ENCODE measurements at regions of chr3 and their contacts with region 1.

Region 1: GRCh38 chr3:72847751-72848702 is at the start of gene SHQ1:
- DNase-seq: peak; percentile 95 to 97 (median 97)
- H3K4me3 ChIP-seq: peak within 1 kb of the TSS; percentile 54 to 96 (median 87)
- H3K27ac ChIP-seq: peak within 1 kb of the TSS in 1 of 2 experiments; percentile 69
- H3K4me1 ChIP-seq: peaks cover 19 to 49% (median 32%) of the 10 kb centered on the region in 4 experiments
- H3K27me3 ChIP-seq: no peaks in the 10 kb centered on the region

Region 2: DNA sequence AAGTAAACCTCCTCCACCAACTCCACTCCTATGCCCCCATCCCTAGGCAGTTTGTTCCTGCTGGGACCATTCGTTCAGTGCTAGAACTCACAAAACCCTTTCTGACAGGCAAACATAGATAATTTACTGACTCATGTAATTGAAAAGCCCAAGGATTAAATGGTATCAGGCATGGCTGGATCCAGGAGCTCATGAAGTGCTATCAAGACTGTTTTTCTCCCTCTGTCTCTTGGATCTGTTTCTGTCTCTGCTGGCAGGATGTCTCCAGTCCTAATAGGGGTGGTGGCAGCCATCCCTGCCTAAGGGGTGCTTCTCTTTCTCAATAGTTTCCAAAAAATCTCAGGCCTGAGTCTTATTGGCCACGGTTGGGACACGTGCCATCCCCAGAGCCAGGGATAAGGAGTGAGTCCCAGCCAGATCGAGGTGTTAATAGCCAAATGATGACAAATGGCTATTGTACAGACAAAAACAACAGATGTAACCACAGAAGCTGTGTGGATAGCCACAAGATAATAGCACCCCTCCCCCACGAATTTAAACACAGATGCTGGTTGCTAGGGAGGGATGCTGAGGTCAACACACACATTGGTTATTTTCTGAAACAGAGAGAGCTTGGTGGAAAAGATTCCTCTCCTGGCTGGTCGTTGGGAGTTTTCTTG is 168.4 kb before region 1 on chr3:
- CTCF ChIA-PET with region 1: no interaction called
- POLR2A ChIA-PET with region 1: no interaction called
- DNase-seq: peak; percentile 23 to 87 (median 84)
- H3K4me3 ChIP-seq: no peak overlapping the region
- H3K27ac ChIP-seq: no peak overlapping the region
- H3K4me1 ChIP-seq: peaks cover 0 to 6% (median 3%) of the 10 kb centered on the region in 4 experiments
- H3K27me3 ChIP-seq: no peaks in the 10 kb centered on the region

Region 3: DNA sequence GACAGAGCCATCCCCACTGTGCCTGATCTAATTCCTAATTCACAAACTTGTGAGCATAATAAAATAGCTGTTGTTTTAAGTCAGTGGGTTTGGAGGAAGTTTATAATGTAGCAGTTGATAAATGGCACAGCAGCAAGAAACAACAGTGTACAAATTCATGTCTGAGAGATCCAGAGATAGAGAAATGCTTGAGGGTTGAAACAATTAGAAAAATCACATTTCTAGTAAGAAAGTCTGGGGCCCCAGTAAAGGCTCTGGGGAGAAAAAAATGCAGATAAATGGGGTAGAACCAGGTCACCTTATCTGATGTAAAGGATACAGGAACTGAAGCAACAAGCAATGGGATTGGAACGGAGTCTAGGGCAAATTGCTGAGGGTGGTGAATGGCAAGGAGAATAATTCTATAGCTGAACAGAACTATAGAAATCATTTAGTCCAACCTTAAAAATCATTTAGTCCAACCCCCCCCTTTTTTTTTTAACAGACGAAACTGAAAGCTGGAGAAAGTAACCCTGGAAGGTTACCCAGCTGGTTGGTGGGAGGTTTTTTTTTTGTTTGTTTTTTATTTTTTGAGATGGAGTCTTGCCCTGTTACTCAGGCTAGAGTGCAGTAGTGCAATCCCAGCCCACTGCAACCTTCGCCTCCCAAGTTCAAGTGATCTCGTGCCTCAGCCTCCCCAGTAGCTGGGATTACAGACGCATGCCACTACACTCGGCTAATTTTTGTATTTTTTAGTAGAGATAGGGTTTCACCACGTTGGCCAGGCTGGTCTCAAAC is 14.5 kb after region 1 on chr3:
- CTCF ChIA-PET with region 1: interaction called, 12 read pairs
- POLR2A ChIA-PET with region 1: no interaction called
- DNase-seq: no peak
- H3K4me3 ChIP-seq: no peak overlapping the region
- H3K27ac ChIP-seq: no peak overlapping the region
- H3K4me1 ChIP-seq: no peaks in the 10 kb centered on the region
- H3K27me3 ChIP-seq: no peaks in the 10 kb centered on the region

Region 4: DNA sequence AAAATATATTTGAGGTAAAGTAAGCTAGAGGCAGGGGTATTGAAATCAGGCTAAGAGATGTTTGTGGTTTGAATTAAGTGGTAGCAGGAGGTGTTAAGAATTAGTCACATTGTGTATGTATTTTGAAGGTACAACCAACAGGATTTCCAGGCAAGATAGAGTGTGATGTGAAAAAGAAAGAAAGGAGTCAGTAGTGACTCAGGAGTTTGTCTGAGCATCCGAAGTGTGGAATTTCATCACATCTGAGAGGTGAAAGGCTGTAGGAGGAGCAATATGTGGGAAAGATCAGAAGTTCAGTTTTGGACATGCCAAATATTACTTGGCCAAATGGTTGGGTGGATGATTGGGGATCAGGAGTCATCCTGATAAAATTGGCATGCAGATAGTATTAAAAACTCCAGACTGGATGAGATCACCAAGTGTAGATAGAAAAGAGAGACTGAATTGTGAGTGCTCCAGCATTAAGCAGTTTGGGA is 181.3 kb after region 1 on chr3:
- CTCF ChIA-PET with region 1: no interaction called
- POLR2A ChIA-PET with region 1: no interaction called
- DNase-seq: peak in 2 of 3 donors; percentile 14 to 26
- H3K4me3 ChIP-seq: no peak overlapping the region
- H3K27ac ChIP-seq: no peak overlapping the region
- H3K4me1 ChIP-seq: peaks cover 0 to 5% (median 0%) of the 10 kb centered on the region in 4 experiments
- H3K27me3 ChIP-seq: no peaks in the 10 kb centered on the region